ENCODE measurements at regions of chr6 and their contacts with region 1.

Region 1: DNA sequence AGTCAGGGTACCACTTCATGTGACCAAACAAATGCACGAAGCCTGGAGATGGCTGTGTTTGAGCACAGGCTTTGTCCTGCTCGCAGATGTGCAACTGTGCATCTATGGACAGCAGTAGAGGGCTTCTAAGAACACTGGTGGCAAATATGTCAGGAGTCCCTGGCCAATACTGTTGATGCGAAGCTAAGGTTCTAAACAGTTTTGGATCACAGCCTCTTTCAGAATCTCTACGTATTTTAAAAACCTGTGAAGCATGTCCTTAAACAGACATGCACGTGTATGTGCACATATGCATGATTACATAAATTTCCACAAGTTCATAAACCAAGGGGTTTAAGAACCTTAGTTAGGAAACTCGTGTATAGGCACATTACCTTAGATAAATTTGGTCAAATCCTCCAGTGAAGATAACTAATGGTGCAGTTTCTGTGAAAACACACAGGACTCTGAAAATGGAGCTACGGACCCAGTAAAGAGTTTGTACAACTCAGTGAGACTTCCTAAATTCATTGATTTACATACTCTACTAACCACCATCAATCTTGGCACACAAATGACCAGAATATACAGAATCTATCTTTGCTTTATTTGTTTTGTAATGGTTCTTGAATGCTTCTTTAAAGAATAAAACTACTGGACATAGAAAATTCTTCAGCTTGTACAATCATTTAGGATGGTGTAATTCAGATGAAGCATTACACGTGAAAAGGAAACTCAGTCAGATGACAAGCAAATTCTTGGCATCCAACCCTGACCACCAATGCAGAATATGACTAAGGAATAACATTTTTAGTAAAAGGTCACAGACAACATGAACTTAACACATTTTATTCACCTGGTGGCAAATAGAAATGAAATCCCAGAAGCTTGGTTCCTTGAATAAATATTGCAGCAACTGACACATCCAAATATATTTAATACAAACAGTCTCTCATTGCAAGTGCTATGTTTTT is 27.4 kb downstream of the KCNQ5 start:
- DNase-seq: peak; percentile 92
- ATAC-seq: peak; percentile 52
- H3K4me3 ChIP-seq: no peak overlapping the region
- H3K27ac ChIP-seq: peak overlapping the region; percentile 91
- H3K4me1 ChIP-seq: peaks cover 48% of the 10 kb centered on the region
- H3K27me3 ChIP-seq: no peaks in the 10 kb centered on the region
- CTCF ChIP-seq: no peak

Region 2: DNA sequence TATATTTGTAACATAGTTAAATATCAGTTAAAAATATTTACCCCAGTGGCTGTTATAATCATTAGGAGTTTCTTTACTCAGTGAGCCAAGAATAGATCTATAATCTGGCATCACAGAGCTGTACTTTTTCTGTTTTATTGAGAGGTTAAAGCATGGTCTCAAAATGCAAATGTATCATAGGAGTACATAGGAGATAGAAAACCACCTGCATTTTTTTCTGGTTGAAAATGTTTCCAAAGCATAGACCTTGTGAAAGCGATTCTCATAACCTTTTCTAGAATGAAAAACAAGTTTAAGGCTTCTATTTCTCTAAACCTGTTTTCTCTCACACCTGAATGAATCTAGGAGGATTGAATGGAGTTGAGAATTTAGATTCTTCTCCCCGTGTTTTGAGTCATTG is 13.1 kb before region 1 on chr6:
- CTCF ChIA-PET with region 1: no interaction called
- POLR2A ChIA-PET with region 1: no interaction called
- intact Hi-C with region 1: no loop called
- DNase-seq: no peak
- ATAC-seq: no peak
- H3K4me3 ChIP-seq: no peak overlapping the region
- H3K27ac ChIP-seq: no peak overlapping the region
- H3K4me1 ChIP-seq: no peaks in the 10 kb centered on the region
- H3K27me3 ChIP-seq: no peaks in the 10 kb centered on the region
- CTCF ChIP-seq: no peak

Region 3: DNA sequence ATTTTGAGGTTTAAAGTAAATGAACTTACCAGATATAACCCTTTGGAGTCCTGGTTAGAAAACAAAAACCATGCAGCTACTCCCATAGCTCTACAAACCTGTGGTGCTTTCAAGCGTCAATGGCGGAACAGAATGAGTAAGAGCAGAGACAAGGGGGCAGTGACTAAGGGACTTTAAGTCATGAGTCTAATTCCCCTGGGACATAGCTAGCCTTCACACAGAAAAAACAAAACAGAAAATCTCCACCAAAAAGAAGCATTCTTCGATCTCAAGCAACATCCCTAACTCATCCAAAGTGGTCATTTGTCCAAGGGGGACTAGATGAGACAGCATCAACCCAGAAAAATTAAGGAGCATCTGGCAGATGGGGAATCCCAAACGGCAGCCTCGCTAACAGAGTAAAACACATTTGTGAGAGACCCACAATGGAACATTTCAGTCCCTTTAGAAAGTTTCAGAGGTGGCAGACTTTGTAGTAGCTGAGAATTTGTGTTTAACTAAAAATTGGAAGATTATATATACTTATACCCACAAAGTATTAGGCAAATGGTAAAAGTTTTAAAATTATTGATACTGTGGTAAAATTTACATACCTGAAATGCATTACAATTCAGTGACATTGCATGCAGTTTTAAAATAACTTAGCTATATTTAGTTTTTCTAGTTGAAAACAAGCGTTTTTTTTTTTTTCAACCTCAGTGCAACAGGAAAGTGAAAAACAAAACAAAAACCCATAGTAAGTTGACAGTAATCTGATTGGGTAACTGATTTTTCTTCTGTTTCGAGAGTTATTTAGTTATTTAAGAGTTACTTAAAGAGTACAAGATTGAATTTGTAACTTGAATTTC is 40.0 kb after region 1 on chr6:
- CTCF ChIA-PET with region 1: no interaction called
- POLR2A ChIA-PET with region 1: no interaction called
- intact Hi-C with region 1: no loop called
- DNase-seq: no peak
- ATAC-seq: no peak
- H3K4me3 ChIP-seq: no peak overlapping the region
- H3K27ac ChIP-seq: no peak overlapping the region
- H3K4me1 ChIP-seq: no peaks in the 10 kb centered on the region
- H3K27me3 ChIP-seq: no peaks in the 10 kb centered on the region
- CTCF ChIP-seq: no peak

Region 4: GRCh38 chr6:72724545-72724944 is 75.2 kb after region 1 on chr6:
- CTCF ChIA-PET with region 1: no interaction called
- POLR2A ChIA-PET with region 1: no interaction called
- intact Hi-C with region 1: no loop called
- DNase-seq: no peak
- ATAC-seq: no peak
- H3K4me3 ChIP-seq: no peak overlapping the region
- H3K27ac ChIP-seq: no peak overlapping the region
- H3K4me1 ChIP-seq: 0 out of 2 replicates have a peak, but pooled peaks cover 3% of the 10 kb centered on the region
- H3K27me3 ChIP-seq: no peaks in the 10 kb centered on the region
- CTCF ChIP-seq: no peak

Region 5: DNA sequence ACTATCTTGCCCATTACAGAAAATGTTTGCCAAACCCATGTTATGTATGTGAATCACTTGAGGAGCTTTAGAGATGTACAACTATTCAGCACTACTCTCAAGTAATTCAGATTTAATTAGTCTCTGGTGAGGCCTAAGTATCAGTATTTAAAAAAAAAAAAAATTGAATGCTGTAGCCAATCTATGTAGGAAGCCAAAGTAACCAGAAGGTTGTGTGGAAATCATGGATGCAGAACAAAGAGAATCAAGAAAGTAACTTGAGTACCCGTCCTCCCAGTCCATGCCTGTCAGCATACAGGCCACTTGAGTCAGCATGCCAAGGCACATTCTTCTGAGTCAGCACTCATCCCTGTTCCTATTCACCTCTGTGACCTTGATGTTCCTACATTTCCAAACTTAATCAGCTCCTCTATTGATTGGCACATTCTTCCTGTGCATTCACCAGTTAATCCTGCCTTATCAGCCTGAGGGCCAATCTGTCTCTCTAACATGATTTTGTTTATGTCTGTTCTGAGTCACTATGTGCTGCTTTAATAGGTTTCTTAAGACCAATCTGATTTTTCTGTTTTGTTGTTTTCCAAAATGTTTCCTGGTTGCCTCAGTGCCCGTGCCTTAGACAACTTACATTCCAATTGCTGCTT is 138.2 kb after region 1 on chr6:
- CTCF ChIA-PET with region 1: no interaction called
- POLR2A ChIA-PET with region 1: no interaction called
- intact Hi-C with region 1: loop called (anchors 10 kb)
- DNase-seq: peak; percentile 59
- ATAC-seq: peak; percentile 48; the same call in 1 of the 2 replicates
- H3K4me3 ChIP-seq: no peak overlapping the region
- H3K27ac ChIP-seq: peak overlapping the region; percentile 41
- H3K4me1 ChIP-seq: peaks cover 16% of the 10 kb centered on the region
- H3K27me3 ChIP-seq: no peaks in the 10 kb centered on the region
- CTCF ChIP-seq: no peak

Region 6: GRCh38 chr6:72809746-72810390 is 160.6 kb after region 1 on chr6:
- CTCF ChIA-PET with region 1: no interaction called
- POLR2A ChIA-PET with region 1: no interaction called
- intact Hi-C with region 1: no loop called
- DNase-seq: no peak
- ATAC-seq: no peak
- H3K4me3 ChIP-seq: no peak overlapping the region
- H3K27ac ChIP-seq: no peak overlapping the region
- H3K4me1 ChIP-seq: peaks cover 14% of the 10 kb centered on the region
- H3K27me3 ChIP-seq: no peaks in the 10 kb centered on the region
- CTCF ChIP-seq: no peak

Region 7: DNA sequence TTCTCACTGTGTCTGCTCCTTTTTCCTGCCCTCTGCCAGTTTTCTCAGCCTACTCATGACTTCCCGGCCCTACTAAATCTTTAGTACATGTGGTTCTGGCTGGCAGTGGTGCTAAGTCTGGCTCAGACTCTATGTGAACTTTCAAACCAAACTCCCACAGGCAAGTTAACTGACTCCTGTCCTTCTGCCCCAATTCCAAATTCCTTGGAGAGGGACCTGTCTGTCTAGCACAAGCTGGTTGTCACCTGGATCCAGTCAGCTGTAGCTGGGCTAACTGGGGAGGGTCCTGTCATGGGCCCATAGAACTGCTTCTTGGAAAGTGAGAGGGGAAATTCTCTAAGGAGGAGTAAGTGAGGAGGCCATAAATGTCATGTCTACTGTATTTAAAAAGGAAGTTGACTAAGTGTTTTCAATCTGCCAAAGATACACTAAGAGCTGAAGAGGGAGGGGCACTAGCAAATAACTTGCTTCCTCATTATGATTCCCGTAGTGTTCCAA is 212.7 kb after region 1 on chr6:
- CTCF ChIA-PET with region 1: no interaction called
- POLR2A ChIA-PET with region 1: no interaction called
- intact Hi-C with region 1: loop called (anchors 1 kb)
- DNase-seq: peak; percentile 67
- ATAC-seq: peak; percentile 94
- H3K4me3 ChIP-seq: no peak overlapping the region
- H3K27ac ChIP-seq: peak overlapping the region; percentile 78
- H3K4me1 ChIP-seq: peaks cover 18% of the 10 kb centered on the region
- H3K27me3 ChIP-seq: no peaks in the 10 kb centered on the region
- CTCF ChIP-seq: no peak

Region 8: GRCh38 chr6:72977114-72977513 is 327.8 kb after region 1 on chr6:
- CTCF ChIA-PET with region 1: no interaction called
- POLR2A ChIA-PET with region 1: no interaction called
- intact Hi-C with region 1: loop called (anchors 5 kb)
- DNase-seq: peak; percentile 55
- ATAC-seq: peak; percentile 78
- H3K4me3 ChIP-seq: no peak overlapping the region
- H3K27ac ChIP-seq: no peak overlapping the region
- H3K4me1 ChIP-seq: peaks cover 32% of the 10 kb centered on the region
- H3K27me3 ChIP-seq: no peaks in the 10 kb centered on the region
- CTCF ChIP-seq: no peak

Region 9: GRCh38 chr6:73074175-73074574 is 424.9 kb after region 1 on chr6:
- CTCF ChIA-PET with region 1: no interaction called
- POLR2A ChIA-PET with region 1: no interaction called
- intact Hi-C with region 1: loop called (anchors 1 kb)
- DNase-seq: peak; percentile 91
- ATAC-seq: peak; percentile 83
- H3K4me3 ChIP-seq: no peak overlapping the region
- H3K27ac ChIP-seq: peak overlapping the region; percentile 95
- H3K4me1 ChIP-seq: peaks cover 53% of the 10 kb centered on the region
- H3K27me3 ChIP-seq: no peaks in the 10 kb centered on the region
- CTCF ChIP-seq: no peak

Region 10: DNA sequence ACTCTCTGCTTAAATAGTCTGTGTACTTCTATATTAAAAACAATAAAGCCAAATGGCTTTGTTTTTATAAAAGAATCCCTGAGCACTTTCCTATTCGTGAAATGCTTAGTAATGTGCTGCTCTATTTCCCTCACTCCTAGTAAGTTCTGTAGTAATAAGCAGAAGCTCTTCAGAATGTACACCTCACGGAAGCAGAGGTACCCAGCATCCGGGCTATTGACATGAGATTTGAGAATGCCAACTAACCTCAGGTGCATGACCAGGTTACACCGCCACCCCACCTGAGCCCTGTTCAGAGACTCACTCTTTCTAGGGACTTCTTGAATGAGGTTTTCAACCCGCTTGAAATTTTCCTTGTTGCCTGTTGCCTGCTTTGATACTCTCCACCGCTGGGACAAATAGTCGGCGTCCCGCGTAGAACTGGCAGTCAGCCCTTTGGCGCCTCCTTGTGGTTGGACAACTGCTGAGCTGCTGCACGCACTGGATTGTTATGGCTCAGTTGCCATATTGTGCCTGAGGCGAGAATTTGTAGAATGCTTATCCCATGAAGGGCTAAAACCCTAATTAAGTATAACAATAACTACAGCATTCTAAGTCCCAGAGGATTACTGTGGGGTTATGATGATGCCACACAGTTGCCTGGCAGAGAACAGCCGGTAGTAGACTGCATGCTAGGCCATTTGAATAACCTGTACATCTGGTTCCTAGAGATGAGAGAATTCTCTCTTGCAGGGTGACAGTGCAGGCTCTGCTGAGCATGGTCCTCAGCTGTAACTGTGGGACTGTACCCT is 480.5 kb after region 1 on chr6:
- CTCF ChIA-PET with region 1: no interaction called
- POLR2A ChIA-PET with region 1: no interaction called
- intact Hi-C with region 1: loop called (anchors 10 kb)
- DNase-seq: peak; percentile 87
- ATAC-seq: peak; percentile 93
- H3K4me3 ChIP-seq: 0 out of 2 replicates have a peak overlapping the region, but pooled peaks have one; percentile 5
- H3K27ac ChIP-seq: no peak overlapping the region
- H3K4me1 ChIP-seq: peaks cover 9% of the 10 kb centered on the region; the same call in 1 of the 2 replicates
- H3K27me3 ChIP-seq: no peaks in the 10 kb centered on the region
- CTCF ChIP-seq: peak; percentile 95

Measured in PC-3 (cell line).